ENCODE measurements at regions of chr6 and their contacts with region 1.

Region 1: DNA sequence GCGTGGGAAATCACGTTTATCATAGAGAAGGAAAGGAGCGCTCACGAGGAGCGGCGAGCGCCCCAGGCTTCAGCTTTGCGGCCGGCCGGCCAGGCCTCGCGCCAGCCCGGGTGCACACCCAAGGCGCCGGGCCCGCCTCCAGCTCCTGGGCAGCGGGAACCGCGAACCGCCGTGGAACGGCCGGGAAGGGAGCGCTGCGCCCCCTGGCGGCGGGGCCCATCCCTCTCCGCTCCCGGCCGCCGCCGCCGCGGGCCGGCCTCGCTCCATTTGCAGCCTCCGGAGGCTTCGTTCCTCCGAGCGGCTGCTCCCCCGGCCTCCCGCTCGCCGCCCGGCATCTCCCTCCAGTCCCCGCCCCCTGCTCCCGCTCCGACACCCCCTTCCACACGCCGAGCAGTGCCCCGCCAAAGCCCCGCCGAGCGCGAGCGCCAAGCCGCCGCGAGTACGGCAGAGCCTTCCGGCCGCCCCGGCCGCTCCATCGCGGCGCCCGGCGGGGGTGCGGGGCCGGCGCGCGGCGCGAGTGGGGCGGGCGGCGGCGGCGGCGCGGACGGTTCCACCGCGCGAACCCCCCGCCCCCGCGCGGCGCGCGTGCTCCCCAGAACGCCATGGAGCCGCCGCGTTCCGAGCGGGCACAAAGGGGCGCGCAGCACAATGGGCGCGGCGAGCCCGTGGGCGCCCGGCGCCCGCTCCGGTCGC is 956 bp downstream of the BEND3 start:
- DNase-seq: peak; percentile 79
- ATAC-seq: peak; percentile 51
- H3K4me3 Mint-ChIP-seq: peak overlapping the region; percentile 82
- H3K27ac Mint-ChIP-seq: no peak overlapping the region
- H3K4me1 Mint-ChIP-seq: peaks cover 19% of the 10 kb centered on the region
- H3K27me3 Mint-ChIP-seq: peaks cover 5% of the 10 kb centered on the region
- CTCF ChIP-seq: no peak

Region 2: DNA sequence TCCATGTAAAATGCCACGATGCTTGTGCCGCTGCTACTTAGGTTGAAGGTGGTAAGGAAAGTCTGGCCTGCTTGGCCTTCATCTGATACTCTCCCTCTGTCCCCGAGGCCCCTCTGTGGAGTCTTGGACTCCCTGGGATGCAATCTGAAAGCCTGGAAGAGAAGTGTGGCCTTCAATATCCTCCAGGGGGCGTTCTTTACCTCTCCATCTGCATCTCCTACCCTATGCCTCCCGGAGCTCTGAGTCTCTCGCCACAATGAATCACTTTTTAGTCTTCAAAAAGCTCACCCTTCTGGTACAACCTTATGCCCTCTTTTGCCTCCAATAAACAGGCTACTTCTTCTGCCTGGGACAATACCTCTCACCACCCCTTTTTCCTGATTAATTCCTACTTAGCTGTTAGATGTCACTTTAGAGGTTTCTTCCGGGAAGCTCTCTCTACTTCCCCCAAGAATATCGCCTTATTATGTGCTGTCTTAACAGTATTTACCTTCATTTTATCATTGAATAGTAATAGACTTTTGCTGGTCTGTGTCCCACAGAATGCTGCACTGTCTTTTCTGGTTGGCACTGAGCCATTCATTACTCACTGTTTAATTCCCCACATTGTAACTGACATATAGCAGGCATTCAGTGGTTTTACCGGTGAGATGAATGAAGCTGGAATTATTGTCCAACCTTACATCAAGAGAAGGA is 774.9 kb before region 1 on chr6:
- CTCF ChIA-PET with region 1: interaction called, 3 read pairs
- POLR2A ChIA-PET with region 1: interaction called, 7 read pairs
- intact Hi-C with region 1: loop called (anchors 1 kb)
- DNase-seq: no peak
- ATAC-seq: peak; percentile 79
- H3K4me3 Mint-ChIP-seq: peak overlapping the region; percentile 59
- H3K27ac Mint-ChIP-seq: no peak overlapping the region
- H3K4me1 Mint-ChIP-seq: peaks cover 7% of the 10 kb centered on the region
- H3K27me3 Mint-ChIP-seq: peaks cover 17% of the 10 kb centered on the region
- CTCF ChIP-seq: no peak

Region 3: DNA sequence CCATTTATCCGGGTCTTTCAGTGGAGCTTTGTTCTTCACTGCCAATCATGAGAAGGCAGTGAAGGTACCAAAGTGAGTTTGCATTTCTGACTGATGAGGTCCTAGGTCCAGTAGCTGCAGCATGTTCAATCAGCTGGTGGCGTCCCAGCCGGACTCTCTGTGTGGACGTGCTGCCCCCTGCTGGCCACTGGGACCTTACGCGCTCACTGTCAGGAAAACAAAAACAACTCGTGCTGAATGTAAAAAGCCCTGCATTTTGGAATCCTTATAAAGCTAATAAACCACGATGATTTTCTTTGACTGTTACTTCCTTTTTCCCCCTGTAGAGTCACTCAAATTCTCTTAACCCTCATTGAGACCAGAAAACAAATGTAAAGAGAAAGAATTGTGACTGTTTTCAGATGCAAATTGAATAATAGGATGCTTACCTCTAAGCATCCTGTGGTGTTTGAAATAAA is 134.9 kb before region 1 on chr6:
- CTCF ChIA-PET with region 1: interaction called, 3 read pairs
- POLR2A ChIA-PET with region 1: no interaction called
- intact Hi-C with region 1: loop called (anchors 2 kb)
- DNase-seq: peak; percentile 79
- ATAC-seq: peak; percentile 32
- H3K4me3 Mint-ChIP-seq: no peak overlapping the region
- H3K27ac Mint-ChIP-seq: no peak overlapping the region
- H3K4me1 Mint-ChIP-seq: peaks cover 19% of the 10 kb centered on the region
- H3K27me3 Mint-ChIP-seq: no peaks in the 10 kb centered on the region
- CTCF ChIP-seq: peak; percentile 28

Region 4: DNA sequence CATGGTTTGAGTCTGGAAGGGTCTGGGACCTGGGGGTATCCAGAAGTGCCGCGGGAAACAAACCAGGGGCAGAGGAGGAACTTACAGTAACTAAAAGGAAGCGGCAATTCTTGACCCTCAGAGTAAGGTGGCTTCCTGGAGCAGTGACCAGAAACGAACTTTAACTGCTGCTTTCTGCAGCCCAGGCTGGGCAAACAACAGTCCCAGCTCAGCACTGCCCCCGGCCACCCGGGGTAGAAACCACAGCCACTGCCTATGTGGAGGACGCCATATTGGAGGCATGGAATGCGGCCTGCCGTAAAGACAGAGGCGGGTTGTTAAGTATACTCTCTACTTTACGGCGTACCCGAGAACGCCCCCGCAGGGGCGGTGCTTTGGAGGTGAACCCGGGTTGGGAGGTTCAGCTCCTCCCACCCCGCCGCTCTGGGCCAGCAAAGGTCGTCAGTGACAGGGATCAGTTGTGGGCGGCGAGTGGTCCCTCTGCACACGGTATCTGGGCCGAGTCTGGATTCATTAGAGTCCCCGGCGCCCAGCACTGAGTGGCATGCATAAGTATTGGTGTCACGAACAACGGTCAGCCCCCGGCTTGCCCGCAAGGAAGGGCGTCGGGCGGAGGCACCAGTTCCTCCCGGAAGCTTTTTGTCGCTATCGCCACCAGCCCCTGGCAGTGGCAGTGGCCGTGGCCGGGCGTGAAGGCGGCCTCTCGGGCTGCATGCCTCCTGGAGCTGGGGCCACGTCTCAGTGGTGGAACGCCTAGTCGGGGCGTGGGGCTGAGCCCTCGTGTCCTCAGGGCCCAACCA is 345.1 kb after region 1 on chr6 and contains the start of gene PDSS2:
- CTCF ChIA-PET with region 1: interaction called, 3 read pairs
- POLR2A ChIA-PET with region 1: interaction called, 12 read pairs
- intact Hi-C with region 1: loop called (anchors 2 kb)
- DNase-seq: peak; percentile 95
- ATAC-seq: peak; percentile 96
- H3K4me3 Mint-ChIP-seq: peak within 1 kb of the TSS; percentile 95
- H3K27ac Mint-ChIP-seq: peak within 1 kb of the TSS; percentile 90
- H3K4me1 Mint-ChIP-seq: peaks cover 16% of the 10 kb centered on the region
- H3K27me3 Mint-ChIP-seq: no peaks in the 10 kb centered on the region
- CTCF ChIP-seq: no peak
- total RNA-seq, gene PDSS2: 14.6 and 19.3 TPM in 2 replicates

Region 5: DNA sequence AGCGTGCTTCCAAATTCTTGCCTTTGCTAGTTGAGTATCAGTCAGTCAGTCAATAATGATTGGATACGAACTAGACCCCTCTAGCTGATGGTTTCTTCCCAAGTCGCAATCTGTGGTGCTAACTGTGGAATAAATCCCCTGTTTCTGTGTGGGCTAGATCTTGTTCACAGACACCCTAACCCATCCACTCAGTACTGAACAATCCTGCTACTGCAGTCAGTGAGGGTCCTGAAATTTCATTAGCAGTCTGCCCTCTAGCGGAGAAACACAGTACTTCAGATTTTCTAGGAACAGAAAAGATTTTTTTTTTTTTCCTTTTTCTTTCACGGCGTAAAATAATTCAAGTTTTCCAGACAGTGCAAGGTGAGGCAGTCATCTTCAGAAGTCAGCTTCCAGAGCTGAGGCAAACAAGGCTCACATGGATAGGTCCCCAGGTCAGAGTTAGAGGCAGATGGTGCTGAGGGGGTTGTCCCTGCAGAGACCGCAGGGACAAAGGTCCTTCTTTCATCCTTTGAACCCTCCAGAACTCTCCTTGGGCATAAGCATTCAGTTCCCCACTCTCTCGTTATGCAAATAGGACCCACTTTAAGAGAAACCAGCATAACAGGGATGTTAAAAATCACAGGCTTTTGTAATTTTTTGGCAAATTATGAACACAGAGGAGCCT is 590.1 kb after region 1 on chr6:
- CTCF ChIA-PET with region 1: no interaction called
- POLR2A ChIA-PET with region 1: no interaction called
- intact Hi-C with region 1: loop called (anchors 5 kb)
- DNase-seq: no peak
- ATAC-seq: no peak
- H3K4me3 Mint-ChIP-seq: no peak overlapping the region
- H3K27ac Mint-ChIP-seq: no peak overlapping the region
- H3K4me1 Mint-ChIP-seq: peaks cover 2% of the 10 kb centered on the region
- H3K27me3 Mint-ChIP-seq: peaks cover 2% of the 10 kb centered on the region
- CTCF ChIP-seq: peak; percentile 88

Region 6: DNA sequence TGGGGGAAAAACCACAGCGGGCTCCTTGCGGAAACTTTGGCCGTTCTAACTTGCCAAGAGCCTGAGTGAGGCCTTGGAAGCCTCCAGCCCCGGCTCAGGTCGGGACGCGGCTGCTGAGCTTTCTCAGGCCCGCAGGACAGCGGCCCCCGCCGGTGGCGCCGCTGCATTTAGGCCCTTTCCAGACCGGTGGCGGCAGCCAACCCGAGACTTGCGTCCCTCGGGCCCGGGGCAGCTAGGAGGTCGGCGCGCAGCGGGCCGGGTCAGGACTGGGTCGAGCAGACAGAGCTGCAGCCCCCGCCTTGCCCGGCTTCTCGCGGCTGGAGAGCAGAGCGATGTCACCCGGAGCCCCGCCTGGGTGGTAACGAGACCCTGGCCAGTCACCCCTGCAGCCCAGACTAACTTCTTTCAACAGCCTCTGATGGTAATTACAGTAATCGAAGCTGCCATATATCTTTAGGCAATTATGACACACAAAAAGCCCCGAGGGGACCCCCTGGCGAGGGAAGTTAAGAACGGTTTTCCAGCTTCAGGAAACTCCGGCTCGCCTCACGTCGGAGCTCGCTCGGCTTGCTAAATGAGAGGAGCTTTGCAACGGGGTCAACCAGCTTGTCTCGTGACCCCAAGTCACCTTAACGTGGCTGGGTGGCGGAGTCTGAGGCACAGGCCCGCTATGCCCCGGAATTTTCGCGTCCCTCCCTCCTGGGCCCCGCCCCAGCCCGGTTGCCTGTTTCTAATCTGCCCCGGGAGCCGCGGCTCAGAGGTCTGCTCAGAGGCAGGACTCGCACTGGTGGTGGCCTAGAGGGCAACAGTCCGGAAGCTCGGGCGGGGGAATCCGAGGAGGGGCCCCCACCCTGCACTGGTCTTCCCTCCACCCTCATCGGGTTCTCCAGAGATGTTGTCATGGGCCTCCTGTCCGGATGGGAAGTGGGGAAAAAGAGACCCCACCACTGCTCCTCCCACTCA is 1054.4 kb after region 1 on chr6:
- CTCF ChIA-PET with region 1: no interaction called
- POLR2A ChIA-PET with region 1: interaction called, 6 read pairs
- intact Hi-C with region 1: loop called (anchors 5 kb)
- DNase-seq: peak; percentile 49
- ATAC-seq: peak; percentile 45
- H3K4me3 Mint-ChIP-seq: peak overlapping the region; percentile 57
- H3K27ac Mint-ChIP-seq: no peak overlapping the region
- H3K4me1 Mint-ChIP-seq: peaks cover 53% of the 10 kb centered on the region
- H3K27me3 Mint-ChIP-seq: peaks cover 76% of the 10 kb centered on the region
- CTCF ChIP-seq: no peak

Region 7: DNA sequence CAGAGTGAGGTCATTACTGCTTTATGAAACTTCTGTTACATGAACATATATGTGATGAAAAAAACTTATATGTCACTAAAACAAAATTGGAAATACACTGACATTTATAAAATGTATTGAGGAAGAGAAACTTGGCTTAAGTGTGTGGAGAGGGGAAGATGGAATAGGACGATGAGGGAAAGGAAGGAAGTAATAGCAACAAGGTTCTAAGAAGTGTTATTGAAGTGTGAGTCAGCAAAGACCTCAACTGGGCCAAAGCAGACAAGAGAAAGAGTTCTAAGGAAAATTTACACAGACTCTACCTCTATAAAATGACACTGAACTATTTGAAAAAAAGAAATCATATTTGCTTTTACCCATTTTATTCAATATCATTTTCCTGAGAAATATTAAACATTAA is 1108.1 kb after region 1 on chr6:
- CTCF ChIA-PET with region 1: no interaction called
- POLR2A ChIA-PET with region 1: no interaction called
- intact Hi-C with region 1: no loop called
- DNase-seq: no peak
- ATAC-seq: no peak
- H3K4me3 Mint-ChIP-seq: no peak overlapping the region
- H3K27ac Mint-ChIP-seq: peak overlapping the region; percentile 30
- H3K4me1 Mint-ChIP-seq: peaks cover 12% of the 10 kb centered on the region
- H3K27me3 Mint-ChIP-seq: no peaks in the 10 kb centered on the region
- CTCF ChIP-seq: no peak